ENCODE measurements at regions of chr5 and their contacts with region 1.

Region 1: GRCh38 chr5:115601701-115602590 is at the start of gene TICAM2:
- DNase-seq: peak; percentile 21 to 78 (median 55)
- ATAC-seq: peak; percentile 82
- H3K4me3 ChIP-seq: peak within 1 kb of the TSS; percentile 56 to 59
- H3K4me3 Mint-ChIP-seq: peak within 1 kb of the TSS; percentile 76
- H3K27ac ChIP-seq: peak within 1 kb of the TSS; percentile 46 to 48
- H3K27ac Mint-ChIP-seq: peak within 1 kb of the TSS; percentile 81
- H3K4me1 ChIP-seq: no peaks in the 10 kb centered on the region
- H3K4me1 Mint-ChIP-seq: peaks cover 28% of the 10 kb centered on the region
- H3K27me3 ChIP-seq: no peaks in the 10 kb centered on the region
- H3K27me3 Mint-ChIP-seq: no peaks in the 10 kb centered on the region
- CTCF ChIP-seq: peak; percentile 30
- total RNA-seq, gene TICAM2: 0.27 to 0.36 TPM

Region 2: DNA sequence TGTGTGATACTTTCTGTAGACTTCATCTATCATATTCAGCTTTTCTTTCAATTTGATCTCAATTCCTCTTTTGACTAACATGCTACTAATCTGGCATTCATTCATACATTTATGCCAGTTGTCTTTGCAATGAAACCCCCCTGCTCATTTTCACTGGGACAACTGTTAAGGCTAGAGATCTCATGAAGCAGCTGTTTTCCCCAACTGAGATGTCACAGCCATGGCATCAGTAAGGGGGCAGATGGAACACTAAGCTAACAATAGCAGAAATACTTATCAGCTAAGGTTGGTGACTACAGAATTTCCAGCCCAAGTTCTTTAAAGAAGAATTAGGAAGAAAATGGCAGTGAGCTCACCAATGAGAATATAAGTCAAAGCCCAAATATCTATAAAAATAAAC is 14.5 kb after region 1 on chr5:
- CTCF ChIA-PET with region 1: interaction called, 4 read pairs
- POLR2A ChIA-PET with region 1: no interaction called
- intact Hi-C with region 1: loop called in 1 of 2 experiments (anchors 2 kb)
- DNase-seq: no peak
- ATAC-seq: no peak
- H3K4me3 ChIP-seq: no peak overlapping the region
- H3K4me3 Mint-ChIP-seq: no peak overlapping the region
- H3K27ac ChIP-seq: no peak overlapping the region
- H3K27ac Mint-ChIP-seq: no peak overlapping the region
- H3K4me1 ChIP-seq: no peaks in the 10 kb centered on the region
- H3K4me1 Mint-ChIP-seq: peaks cover 30% of the 10 kb centered on the region
- H3K27me3 ChIP-seq: no peaks in the 10 kb centered on the region
- H3K27me3 Mint-ChIP-seq: no peaks in the 10 kb centered on the region
- CTCF ChIP-seq: no peak